Esophagus muscularis mucosa (tissue), 4 donors: ENCODE measurements at regions of chr13 and their contacts with region 1.

Region 1: DNA sequence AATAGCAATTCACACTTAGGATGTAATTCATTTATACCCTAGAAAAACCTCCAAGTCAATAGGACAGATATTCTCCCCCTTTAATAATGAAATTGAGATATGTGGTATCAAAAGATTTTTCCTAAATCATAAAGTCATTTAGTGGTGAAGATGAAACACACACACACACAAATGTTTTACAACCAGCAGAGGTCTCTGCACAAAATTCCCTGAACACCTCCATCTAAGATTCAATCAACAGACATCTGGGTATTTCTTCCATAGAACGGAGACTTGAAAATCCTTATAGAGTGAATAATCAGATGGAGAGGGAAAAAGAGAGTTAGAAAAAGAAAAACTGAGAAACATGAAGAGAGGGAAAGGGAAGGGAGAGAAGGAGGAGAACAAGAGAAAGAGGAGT is 52.8 kb downstream of the MYCBP2 start:
- DNase-seq: no peak
- H3K4me3 ChIP-seq: no peak overlapping the region
- H3K27ac ChIP-seq: no peak overlapping the region
- H3K4me1 ChIP-seq: no peaks in the 10 kb centered on the region
- H3K27me3 ChIP-seq: no peaks in the 10 kb centered on the region
- CTCF ChIP-seq: no peak
- EP300 ChIP-seq: no peak
- POLR2A ChIP-seq: no peak

Region 2: GRCh38 chr13:77477299-77477848 is 203.2 kb after region 1 on chr13:
- intact Hi-C with region 1: loop called (anchors 10 kb)
- DNase-seq: no peak
- H3K4me3 ChIP-seq: no peak overlapping the region
- H3K27ac ChIP-seq: no peak overlapping the region
- H3K4me1 ChIP-seq: peaks cover 0 to 14% (median 10%) of the 10 kb centered on the region in 4 donors
- H3K27me3 ChIP-seq: no peaks in the 10 kb centered on the region
- CTCF ChIP-seq: no peak
- EP300 ChIP-seq: no peak
- POLR2A ChIP-seq: no peak